Activated CD4-positive, alpha-beta memory T cell treated with anti-CD3 and anti-CD28 coated beads, Interleukin-2, amount 10 ng/mL, durations not matched to agents 7 days and 5 days (primary cell): ENCODE measurements at regions of chr15 and their contacts with region 1.

Region 1: GRCh38 chr15:84633311-84634227 is 20.5 kb downstream of the WDR73 start:
- DNase-seq: peak; percentile 72
- H3K4me3 Mint-ChIP-seq: peak overlapping the region; percentile 89
- H3K27ac Mint-ChIP-seq: peak overlapping the region; percentile 99
- H3K4me1 Mint-ChIP-seq: peaks cover 57% of the 10 kb centered on the region
- H3K27me3 Mint-ChIP-seq: no peaks in the 10 kb centered on the region

Region 2: DNA sequence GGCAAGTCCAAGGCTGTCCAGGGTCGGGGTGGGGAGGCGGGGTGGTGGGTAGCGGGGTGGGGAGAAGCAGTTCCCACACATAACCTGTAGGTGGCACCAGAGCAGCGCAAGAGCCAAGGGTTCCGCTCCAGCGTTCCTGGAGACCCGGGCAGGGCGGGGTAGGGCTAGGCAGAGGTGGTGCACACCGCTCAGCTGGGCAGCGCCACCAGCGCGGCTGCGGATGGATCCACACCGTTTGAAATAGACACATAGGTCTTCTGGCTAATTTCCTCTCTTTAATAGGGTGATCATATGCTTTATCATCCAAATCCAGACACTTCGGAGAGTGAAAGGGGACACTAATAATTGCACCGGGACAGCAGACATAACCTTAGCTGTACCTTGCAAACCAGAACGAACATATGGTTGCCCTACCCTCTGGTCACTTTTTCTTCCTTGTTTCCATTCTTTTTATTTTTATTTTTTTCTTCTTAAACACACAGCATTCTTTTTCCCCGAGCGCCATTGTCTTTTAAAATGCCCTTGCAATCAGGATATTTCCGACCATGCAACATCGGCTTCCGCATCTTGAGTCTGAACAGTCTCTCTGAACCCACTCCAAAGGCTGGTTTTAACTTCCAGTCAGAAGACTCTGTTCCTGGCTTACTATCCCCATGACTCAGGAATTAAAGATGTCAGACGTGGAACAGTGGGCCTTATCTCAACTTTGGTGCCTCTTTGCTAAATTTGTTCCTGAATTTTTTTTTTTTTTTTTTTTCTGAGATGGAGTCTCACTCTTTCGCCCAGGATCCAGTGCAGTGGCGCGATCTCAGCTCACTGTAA is 45.3 kb before region 1 on chr15:
- CTCF ChIA-PET with region 1: interaction called, 17 read pairs
- POLR2A ChIA-PET with region 1: no interaction called
- DNase-seq: peak; percentile 87
- H3K4me3 Mint-ChIP-seq: peak overlapping the region; percentile 43
- H3K27ac Mint-ChIP-seq: no peak overlapping the region
- H3K4me1 Mint-ChIP-seq: peaks cover 4% of the 10 kb centered on the region
- H3K27me3 Mint-ChIP-seq: peaks cover 14% of the 10 kb centered on the region

Region 3: DNA sequence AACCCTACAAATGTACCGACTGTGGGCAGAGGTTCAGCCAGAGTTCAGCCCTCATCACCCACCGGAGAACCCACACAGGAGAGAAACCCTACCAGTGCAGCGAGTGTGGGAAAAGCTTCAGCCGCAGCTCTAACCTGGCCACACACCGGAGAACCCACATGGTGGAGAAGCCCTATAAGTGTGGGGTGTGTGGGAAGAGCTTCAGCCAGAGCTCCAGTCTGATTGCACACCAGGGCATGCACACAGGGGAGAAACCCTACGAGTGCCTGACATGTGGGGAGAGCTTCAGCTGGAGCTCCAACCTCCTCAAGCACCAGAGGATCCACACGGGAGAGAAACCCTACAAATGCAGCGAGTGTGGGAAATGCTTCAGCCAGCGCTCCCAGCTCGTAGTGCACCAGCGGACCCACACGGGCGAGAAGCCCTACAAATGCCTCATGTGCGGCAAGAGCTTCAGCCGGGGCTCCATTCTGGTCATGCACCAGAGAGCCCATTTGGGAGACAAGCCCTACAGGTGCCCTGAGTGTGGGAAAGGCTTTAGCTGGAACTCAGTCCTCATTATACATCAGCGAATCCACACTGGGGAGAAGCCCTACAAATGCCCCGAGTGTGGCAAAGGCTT is 12.1 kb before region 1 on chr15:
- CTCF ChIA-PET with region 1: no interaction called
- POLR2A ChIA-PET with region 1: interaction called, 18 read pairs
- DNase-seq: no peak
- H3K4me3 Mint-ChIP-seq: no peak overlapping the region
- H3K27ac Mint-ChIP-seq: no peak overlapping the region
- H3K4me1 Mint-ChIP-seq: no peaks in the 10 kb centered on the region
- H3K27me3 Mint-ChIP-seq: no peaks in the 10 kb centered on the region

Region 4: GRCh38 chr15:84658080-84658787 is 24.7 kb after region 1 on chr15 and contains the start of gene NMB:
- CTCF ChIA-PET with region 1: interaction called, 9 read pairs
- POLR2A ChIA-PET with region 1: interaction called, 24 read pairs
- DNase-seq: peak; percentile 83
- H3K4me3 Mint-ChIP-seq: peak within 1 kb of the TSS; percentile 73
- H3K27ac Mint-ChIP-seq: peak within 1 kb of the TSS; percentile 76
- H3K4me1 Mint-ChIP-seq: peaks cover 35% of the 10 kb centered on the region
- H3K27me3 Mint-ChIP-seq: no peaks in the 10 kb centered on the region
- total RNA-seq, gene NMB: 4.0 to 4.1 TPM

Region 5: DNA sequence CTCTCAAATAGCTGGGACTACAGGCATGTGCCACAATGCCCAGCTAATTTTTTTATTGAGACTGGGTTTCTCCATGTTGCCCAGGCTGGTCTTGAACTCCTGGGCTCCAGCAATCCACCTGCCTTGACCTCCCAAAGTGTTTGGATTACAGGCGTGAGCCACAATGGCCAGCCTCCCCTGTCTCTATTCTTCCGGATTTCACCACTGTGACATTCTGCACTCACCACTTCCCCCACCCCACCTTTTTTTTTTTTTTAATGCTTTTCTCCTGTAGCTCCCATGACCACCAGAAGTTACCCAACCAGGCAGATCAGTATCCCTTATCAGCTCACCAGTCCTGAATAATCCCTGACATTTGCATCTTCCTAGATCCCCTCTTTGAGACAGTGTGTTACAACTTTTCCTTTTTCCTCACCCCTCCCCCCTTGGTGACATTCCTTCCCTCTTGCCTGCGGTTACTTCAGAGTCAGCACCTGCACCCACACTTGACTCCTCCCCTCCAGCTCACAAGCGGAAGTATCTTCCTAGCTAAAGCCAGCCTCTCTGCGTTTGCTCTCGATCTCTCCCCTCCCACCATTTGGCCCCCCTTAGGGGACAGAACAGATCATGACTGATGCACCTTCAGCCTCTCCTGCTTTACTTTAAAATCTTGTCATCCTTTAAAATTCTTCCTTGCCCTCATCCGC is 101.4 kb after region 1 on chr15:
- CTCF ChIA-PET with region 1: no interaction called
- POLR2A ChIA-PET with region 1: interaction called, 15 read pairs
- DNase-seq: peak; percentile 79
- H3K4me3 Mint-ChIP-seq: peak overlapping the region; percentile 58
- H3K27ac Mint-ChIP-seq: peak overlapping the region; percentile 98
- H3K4me1 Mint-ChIP-seq: peaks cover 57% of the 10 kb centered on the region
- H3K27me3 Mint-ChIP-seq: no peaks in the 10 kb centered on the region

Region 6: DNA sequence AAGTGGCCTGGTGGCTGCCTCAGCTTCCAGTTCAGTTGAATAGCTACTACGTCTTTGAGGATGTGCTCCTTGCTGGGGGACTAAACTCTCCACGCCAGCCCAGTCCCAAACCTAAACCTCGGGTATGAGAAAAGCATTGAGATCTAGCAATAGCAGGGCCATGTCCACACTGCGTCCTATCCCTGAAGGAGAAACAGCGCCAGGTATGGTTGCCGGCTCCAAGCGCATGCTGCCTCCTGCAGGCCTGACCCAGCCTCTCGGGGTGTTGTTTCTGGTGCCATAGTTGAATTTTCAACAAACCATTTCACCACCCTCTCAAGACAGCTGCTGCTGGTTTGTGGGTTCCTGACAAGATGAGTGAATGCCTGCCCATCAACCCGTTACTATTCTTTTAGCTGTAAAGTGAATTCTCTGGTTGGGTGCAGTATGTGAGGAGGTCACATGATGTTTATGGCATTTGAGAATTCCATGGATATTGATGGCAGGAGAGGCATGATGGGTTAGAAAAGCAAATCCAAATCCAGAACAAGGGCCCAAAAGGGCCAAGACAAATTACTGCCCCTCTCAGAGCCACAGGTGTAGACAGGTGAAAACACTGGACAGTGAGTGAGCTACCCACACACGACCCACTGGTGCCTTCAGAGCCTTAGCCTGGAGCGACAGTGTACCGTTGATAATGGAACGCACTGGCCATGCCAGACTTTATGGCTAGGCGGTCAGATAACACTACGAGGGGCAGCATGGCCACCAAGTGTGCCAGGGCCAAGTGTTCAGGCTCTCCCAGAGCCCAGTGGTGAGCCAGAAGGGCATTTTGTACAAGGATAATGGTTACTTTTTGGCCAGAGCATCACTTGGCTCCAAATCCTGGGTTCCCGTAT is 238.1 kb after region 1 on chr15:
- CTCF ChIA-PET with region 1: no interaction called
- POLR2A ChIA-PET with region 1: no interaction called
- DNase-seq: no peak
- H3K4me3 Mint-ChIP-seq: no peak overlapping the region
- H3K27ac Mint-ChIP-seq: no peak overlapping the region
- H3K4me1 Mint-ChIP-seq: no peaks in the 10 kb centered on the region
- H3K27me3 Mint-ChIP-seq: peaks cover 1% of the 10 kb centered on the region